B cell (primary cell): ENCODE measurements at regions of chr3 and their contacts with region 1.

Region 1: DNA sequence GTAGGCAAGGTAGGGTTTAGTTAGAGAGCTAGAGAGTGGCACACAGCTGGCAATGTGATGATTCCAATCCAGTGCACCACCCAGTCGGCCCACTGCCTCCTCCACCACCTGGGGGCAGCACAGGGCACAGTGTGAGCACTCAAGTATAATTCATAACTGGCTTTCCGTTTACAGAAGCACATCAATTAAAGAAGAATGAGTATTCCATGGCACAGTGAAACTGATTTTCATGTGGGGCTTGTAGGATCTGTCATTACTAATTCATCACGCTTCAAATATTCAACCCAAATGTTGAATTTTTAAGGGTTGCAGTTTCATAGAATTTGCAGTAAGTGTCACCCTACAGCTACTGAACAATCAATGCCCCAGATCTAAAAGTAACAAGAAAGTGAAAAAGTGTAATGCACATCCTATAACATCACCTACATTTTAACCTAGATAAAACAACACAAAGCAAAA is 149.9 kb downstream of the IGSF11 start:
- DNase-seq: peak; percentile 57
- ATAC-seq: peak; percentile 78
- H3K4me3 ChIP-seq: no peak overlapping the region
- H3K4me3 Mint-ChIP-seq: no peak overlapping the region
- H3K27ac ChIP-seq: no peak overlapping the region
- H3K27ac Mint-ChIP-seq: no peak overlapping the region
- H3K4me1 ChIP-seq: no peaks in the 10 kb centered on the region
- H3K4me1 Mint-ChIP-seq: no peaks in the 10 kb centered on the region
- H3K27me3 ChIP-seq: peaks cover 0 to 3% (median 1%) of the 10 kb centered on the region in 4 experiments
- H3K27me3 Mint-ChIP-seq: peaks cover 28% of the 10 kb centered on the region
- CTCF ChIP-seq: peak; percentile 90

Region 2: DNA sequence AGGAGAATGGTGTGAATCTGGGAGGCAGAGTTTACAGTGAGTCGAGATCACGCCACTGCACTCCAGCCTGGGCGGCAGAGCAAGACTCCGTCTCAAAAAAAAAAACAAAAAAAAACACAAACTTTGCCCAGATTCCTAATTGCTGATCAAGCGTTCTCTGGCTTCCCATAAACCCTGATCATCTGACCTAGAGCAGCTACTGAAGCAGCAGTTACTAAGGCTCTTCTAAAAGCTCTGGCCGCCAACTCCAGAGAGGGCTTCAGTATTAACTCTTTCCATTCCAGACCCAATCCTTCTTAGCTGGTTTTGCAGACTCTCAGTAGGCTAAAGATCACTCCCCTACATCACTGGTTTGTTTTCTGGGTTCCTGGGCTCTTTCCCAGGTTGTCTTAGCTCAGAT is 51.7 kb before region 1 on chr3:
- CTCF ChIA-PET with region 1: no interaction called
- POLR2A ChIA-PET with region 1: no interaction called
- intact Hi-C with region 1: no loop called
- DNase-seq: no peak
- ATAC-seq: no peak
- H3K4me3 ChIP-seq: no peak overlapping the region
- H3K4me3 Mint-ChIP-seq: no peak overlapping the region
- H3K27ac ChIP-seq: no peak overlapping the region
- H3K27ac Mint-ChIP-seq: no peak overlapping the region
- H3K4me1 ChIP-seq: no peaks in the 10 kb centered on the region
- H3K4me1 Mint-ChIP-seq: no peaks in the 10 kb centered on the region
- H3K27me3 ChIP-seq: no peaks in the 10 kb centered on the region
- H3K27me3 Mint-ChIP-seq: peaks cover 3% of the 10 kb centered on the region
- CTCF ChIP-seq: no peak

Region 3: GRCh38 chr3:118859950-118860349 is 24.8 kb before region 1 on chr3:
- CTCF ChIA-PET with region 1: interaction called, 11 read pairs
- POLR2A ChIA-PET with region 1: no interaction called
- intact Hi-C with region 1: no loop called
- DNase-seq: no peak
- ATAC-seq: no peak
- H3K4me3 ChIP-seq: no peak overlapping the region
- H3K4me3 Mint-ChIP-seq: no peak overlapping the region
- H3K27ac ChIP-seq: no peak overlapping the region
- H3K27ac Mint-ChIP-seq: no peak overlapping the region
- H3K4me1 ChIP-seq: no peaks in the 10 kb centered on the region
- H3K4me1 Mint-ChIP-seq: no peaks in the 10 kb centered on the region
- H3K27me3 ChIP-seq: no peaks in the 10 kb centered on the region
- H3K27me3 Mint-ChIP-seq: peaks cover 5% of the 10 kb centered on the region
- CTCF ChIP-seq: no peak

Region 4: GRCh38 chr3:118907909-118908308 is 23.1 kb after region 1 on chr3:
- CTCF ChIA-PET with region 1: interaction called, 15 read pairs
- POLR2A ChIA-PET with region 1: no interaction called
- intact Hi-C with region 1: no loop called
- DNase-seq: no peak
- ATAC-seq: no peak
- H3K4me3 ChIP-seq: no peak overlapping the region
- H3K4me3 Mint-ChIP-seq: no peak overlapping the region
- H3K27ac ChIP-seq: no peak overlapping the region
- H3K27ac Mint-ChIP-seq: no peak overlapping the region
- H3K4me1 ChIP-seq: no peaks in the 10 kb centered on the region
- H3K4me1 Mint-ChIP-seq: no peaks in the 10 kb centered on the region
- H3K27me3 ChIP-seq: peaks cover 0 to 6% (median 1%) of the 10 kb centered on the region in 4 experiments
- H3K27me3 Mint-ChIP-seq: peaks cover 20% of the 10 kb centered on the region
- CTCF ChIP-seq: no peak

Region 5: DNA sequence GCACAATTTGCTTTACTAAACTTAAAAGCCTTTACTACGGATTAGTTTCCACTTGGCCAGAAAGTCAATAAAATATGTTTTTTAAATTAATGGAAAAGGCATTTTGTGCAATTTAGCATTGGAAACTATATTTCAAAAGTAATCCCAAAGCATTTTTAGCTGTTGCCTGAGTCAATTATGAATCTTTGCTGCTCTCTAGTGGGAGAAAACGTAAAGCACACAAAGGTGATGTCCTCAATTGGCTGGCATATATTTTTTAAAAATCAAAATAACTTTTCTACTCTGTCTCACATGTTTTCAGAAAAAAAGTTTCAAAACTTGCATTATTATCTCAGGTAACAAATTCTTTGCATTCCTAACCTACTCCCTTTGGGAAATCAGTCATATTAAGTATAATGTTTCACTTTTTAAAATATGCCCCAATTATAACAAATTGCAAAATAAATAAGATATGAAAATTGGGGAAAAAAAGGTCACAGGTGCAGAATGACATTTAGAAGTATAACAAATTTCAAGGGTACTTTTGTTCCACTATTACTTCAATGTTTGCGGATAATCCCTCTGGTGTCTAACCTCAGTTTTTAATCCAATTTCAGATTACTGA is 213.9 kb after region 1 on chr3:
- CTCF ChIA-PET with region 1: interaction called, 52 read pairs
- POLR2A ChIA-PET with region 1: no interaction called
- intact Hi-C with region 1: no loop called
- DNase-seq: peak; percentile 22
- ATAC-seq: no peak
- H3K4me3 ChIP-seq: no peak overlapping the region
- H3K4me3 Mint-ChIP-seq: no peak overlapping the region
- H3K27ac ChIP-seq: no peak overlapping the region
- H3K27ac Mint-ChIP-seq: no peak overlapping the region
- H3K4me1 ChIP-seq: no peaks in the 10 kb centered on the region
- H3K4me1 Mint-ChIP-seq: no peaks in the 10 kb centered on the region
- H3K27me3 ChIP-seq: no peaks in the 10 kb centered on the region
- H3K27me3 Mint-ChIP-seq: peaks cover 6% of the 10 kb centered on the region
- CTCF ChIP-seq: peak; percentile 64

Region 6: DNA sequence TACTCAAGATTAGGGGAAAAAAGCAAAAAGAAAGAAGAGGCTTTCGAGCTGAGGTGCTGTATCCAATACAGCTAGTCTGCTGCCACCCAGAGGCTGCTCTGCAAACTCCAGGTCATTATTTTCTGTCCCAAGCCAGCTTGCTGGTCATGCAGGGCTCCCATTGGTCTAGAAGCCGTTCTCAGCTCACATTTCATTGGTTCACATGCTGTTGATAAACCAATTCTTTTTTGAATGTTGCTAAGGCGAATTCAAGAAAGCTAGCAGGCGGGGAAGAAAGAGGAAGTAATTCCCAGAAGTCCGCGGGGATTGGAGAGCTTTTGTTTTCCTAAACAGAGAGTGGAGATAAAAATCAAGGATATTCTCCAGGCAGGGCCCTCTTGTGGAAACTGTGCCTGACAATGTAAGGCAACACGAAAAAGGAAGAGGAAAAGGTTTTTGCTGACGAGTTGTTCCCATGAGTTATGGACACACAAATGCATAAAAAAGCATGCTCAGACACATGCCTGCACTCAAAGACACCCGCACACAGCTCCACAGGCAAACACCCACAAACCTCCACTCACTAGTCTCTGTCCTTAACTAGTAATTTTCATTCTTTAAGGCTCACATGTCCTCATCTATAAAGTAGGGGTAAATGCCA is 1532.6 kb after region 1 on chr3:
- CTCF ChIA-PET with region 1: interaction called, 5 read pairs
- POLR2A ChIA-PET with region 1: no interaction called
- intact Hi-C with region 1: loop called (anchors 5 kb)
- DNase-seq: peak; percentile 92
- ATAC-seq: peak; percentile 100
- H3K4me3 ChIP-seq: peak overlapping the region; percentile 39 to 76 (median 54)
- H3K4me3 Mint-ChIP-seq: peak overlapping the region; percentile 82
- H3K27ac ChIP-seq: no peak overlapping the region
- H3K27ac Mint-ChIP-seq: peak overlapping the region; percentile 2
- H3K4me1 ChIP-seq: peaks cover 7 to 14% of the 10 kb centered on the region in 2 donors
- H3K4me1 Mint-ChIP-seq: peaks cover 21% of the 10 kb centered on the region
- H3K27me3 ChIP-seq: no peaks in the 10 kb centered on the region
- H3K27me3 Mint-ChIP-seq: no peaks in the 10 kb centered on the region
- CTCF ChIP-seq: peak; percentile 86